Activated CD4-positive, alpha-beta memory T cell treated with anti-CD3 and anti-CD28 coated beads for 36 hours (primary cell): ENCODE measurements at regions of chr3 and their contacts with region 1.

Region 1: DNA sequence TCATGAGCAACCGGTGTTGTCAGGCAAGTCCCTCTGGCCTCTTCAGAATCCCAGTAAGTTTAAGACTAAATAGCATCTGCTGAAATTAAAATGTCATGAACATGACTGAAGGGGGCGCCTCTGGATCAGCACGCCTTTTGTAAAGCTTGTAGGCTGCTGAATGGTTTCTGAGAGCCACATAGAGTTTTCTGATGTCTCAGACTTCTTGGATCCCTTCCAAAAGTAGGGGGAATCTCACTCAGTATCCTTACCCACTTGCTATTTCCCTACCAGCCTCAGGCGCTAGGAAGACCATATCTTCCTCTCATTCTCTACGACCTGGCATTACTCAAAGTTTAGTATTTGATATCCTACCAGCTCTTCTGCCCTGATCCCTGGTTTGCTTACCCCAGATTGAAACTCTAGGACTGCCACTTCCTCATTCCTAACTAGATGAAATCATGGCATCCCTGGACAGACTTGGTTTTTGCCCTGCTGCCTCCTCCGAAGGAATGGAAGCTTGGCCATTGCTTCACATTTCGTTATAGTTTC is 62.7 kb upstream of the CD47 start:
- DNase-seq: peak; percentile 68
- H3K4me3 Mint-ChIP-seq: no peak overlapping the region
- H3K27ac Mint-ChIP-seq: no peak overlapping the region
- H3K4me1 Mint-ChIP-seq: peaks cover 17% of the 10 kb centered on the region
- H3K27me3 Mint-ChIP-seq: no peaks in the 10 kb centered on the region

Region 2: DNA sequence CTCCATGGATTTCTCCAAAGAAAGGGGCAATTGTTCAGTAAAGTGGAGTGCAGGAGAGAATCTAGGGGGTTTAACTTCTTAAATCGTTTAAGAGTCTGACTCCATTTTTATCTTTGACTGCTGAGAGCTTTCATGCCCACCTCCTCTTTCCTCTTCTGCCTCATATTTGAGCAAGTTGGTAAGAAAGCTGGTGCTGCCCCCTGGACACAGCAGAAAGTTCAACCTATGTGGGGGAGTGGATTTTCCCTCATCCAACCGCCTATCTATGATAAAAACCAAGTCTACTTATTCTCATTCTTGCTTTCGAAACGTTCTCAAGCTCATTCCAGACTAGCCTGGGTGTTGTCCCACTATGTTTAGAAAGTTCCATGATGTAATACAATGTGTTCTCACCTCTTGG is 168.8 kb after region 1 on chr3:
- CTCF ChIA-PET with region 1: no interaction called
- POLR2A ChIA-PET with region 1: no interaction called
- intact Hi-C with region 1: loop called (anchors 1 kb)
- DNase-seq: peak; percentile 44
- H3K4me3 Mint-ChIP-seq: no peak overlapping the region
- H3K27ac Mint-ChIP-seq: no peak overlapping the region
- H3K4me1 Mint-ChIP-seq: peaks cover 11% of the 10 kb centered on the region
- H3K27me3 Mint-ChIP-seq: no peaks in the 10 kb centered on the region

Region 3: GRCh38 chr3:108406661-108407206 is 253.2 kb after region 1 on chr3:
- CTCF ChIA-PET with region 1: interaction called, 14 read pairs
- POLR2A ChIA-PET with region 1: no interaction called
- intact Hi-C with region 1: loop called (anchors 1 kb)
- DNase-seq: no peak
- H3K4me3 Mint-ChIP-seq: no peak overlapping the region
- H3K27ac Mint-ChIP-seq: no peak overlapping the region
- H3K4me1 Mint-ChIP-seq: no peaks in the 10 kb centered on the region
- H3K27me3 Mint-ChIP-seq: no peaks in the 10 kb centered on the region

Region 4: GRCh38 chr3:108477511-108478147 is 324.1 kb after region 1 on chr3:
- CTCF ChIA-PET with region 1: interaction called, 72 read pairs
- POLR2A ChIA-PET with region 1: no interaction called
- intact Hi-C with region 1: loop called (anchors 1 kb)
- DNase-seq: peak; percentile 67
- H3K4me3 Mint-ChIP-seq: no peak overlapping the region
- H3K27ac Mint-ChIP-seq: no peak overlapping the region
- H3K4me1 Mint-ChIP-seq: peaks cover 3% of the 10 kb centered on the region
- H3K27me3 Mint-ChIP-seq: peaks cover 1% of the 10 kb centered on the region